Naive thymus-derived CD8-positive, alpha-beta T cell (primary cell): ENCODE measurements at regions of chr14 and their contacts with region 1.

Region 1: DNA sequence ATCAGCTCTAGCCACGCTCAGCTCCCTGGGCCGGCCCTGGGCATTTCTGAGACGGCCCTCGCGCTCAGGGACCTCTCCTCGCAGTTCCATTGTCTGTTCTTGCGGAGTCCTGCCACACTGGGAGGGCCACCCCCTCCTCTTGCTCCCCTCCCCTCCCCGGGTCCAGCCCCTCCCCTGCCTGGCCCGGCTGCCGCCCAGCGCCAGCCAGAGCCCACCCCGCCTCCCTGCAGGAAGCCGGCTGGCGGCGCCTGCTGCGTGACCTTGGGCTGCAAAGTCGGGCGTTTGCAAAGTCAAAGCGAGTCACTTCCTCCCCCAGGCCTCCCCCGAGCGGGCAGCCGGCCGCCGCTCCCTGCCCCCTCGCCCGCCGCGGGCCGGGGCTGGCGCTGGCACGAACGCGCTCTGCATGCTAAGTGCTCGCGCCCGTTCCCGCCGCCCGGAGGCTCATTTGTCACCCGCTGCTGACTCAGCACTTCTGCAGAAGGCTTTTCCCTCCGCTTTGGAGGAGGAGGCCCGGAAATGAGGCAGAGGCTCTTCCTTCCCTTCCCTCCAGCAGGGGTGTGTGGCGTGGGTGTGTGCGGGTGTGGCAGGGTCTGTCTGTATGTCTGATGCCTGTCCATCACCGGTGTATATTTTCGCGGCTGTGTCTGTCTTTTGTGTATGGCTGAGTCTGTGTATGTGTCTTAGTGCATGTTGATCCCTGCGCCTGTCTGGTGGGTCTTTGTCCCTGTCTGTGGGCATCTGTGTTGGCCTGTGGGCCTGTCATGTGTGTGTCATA is 72.0 kb downstream of the IRF2BPL start:
- DNase-seq: peak; percentile 66 to 88 (median 77)
- ATAC-seq: peak; percentile 53 to 55
- H3K4me3 Mint-ChIP-seq: peak overlapping the region; percentile 79 to 92 (median 89)
- H3K27ac Mint-ChIP-seq: peak overlapping the region; percentile 93 to 99 (median 96)
- H3K4me1 Mint-ChIP-seq: peaks cover 23 to 78% (median 72%) of the 10 kb centered on the region in 4 donors
- H3K27me3 Mint-ChIP-seq: no peaks in the 10 kb centered on the region

Region 2: DNA sequence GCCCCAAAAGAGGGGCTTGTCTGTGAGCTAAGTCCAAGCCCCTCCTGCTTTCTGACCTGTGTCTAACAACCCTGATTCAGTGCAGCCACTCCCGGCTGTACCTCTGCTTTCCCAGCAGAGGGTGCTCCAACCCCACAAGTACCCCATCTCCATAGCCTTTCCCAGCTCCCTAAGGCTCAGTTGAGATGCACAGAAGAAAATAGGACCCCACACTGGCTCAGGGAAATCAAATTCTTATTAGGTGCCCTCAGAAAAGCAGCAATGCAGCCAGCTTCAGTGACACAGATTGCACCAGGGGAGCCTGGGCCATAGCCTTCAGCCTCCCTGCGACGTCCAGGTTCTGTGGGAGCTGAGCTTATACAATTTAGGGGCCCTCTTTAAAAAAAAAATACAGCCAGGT is 80.4 kb before region 1 on chr14:
- POLR2A ChIA-PET with region 1: no interaction called
- DNase-seq: peak in 9 of 10 donors; percentile 16 to 56 (median 39)
- ATAC-seq: peak; percentile 69 to 75
- H3K4me3 Mint-ChIP-seq: no peak overlapping the region
- H3K27ac Mint-ChIP-seq: no peak overlapping the region
- H3K4me1 Mint-ChIP-seq: peaks cover 0 to 2% (median under 1%) of the 10 kb centered on the region in 4 donors
- H3K27me3 Mint-ChIP-seq: no peaks in the 10 kb centered on the region

Region 3: DNA sequence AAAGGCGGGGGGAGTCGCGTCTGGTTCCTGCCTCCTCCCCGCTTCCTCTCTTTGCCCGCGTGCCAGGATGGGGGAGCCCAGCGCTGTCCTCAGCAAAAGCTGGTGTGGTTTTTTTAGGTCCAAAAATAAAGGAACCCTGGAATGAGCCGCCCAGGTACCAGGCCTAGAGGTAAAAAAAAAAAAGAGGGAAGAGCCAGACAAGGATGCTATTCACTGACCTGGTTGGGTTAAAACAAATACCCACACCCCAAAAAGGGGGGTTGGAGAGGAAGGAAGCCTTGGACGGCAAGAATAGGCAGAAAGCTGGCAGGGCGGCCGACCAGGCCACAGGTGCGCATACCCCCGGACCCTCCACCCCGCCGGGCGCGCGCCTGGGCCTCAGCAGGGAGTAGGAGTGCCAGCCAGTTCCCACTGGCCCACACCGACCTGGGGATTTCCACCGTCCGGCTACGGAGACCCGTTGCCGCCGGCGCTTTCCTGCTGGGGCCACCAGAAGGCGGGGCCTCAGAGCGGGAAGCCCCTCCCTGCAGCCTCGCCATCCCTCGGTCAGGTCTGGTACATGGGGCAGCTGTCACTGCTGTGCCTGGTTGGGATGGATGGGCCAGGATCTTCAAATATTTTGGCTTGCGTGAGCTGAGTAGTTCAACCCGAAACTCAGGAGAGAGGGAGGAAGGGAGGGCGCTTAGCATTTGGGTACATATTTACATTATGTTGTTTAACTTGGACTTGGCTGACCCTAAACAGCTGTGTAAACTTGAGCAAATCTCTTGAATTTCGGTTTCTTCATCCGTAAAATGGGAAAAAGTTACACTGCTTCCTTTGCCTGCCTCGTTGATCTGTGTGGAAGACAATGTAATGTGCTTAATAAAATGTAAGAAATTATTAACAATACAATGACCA is 77.4 kb after region 1 on chr14:
- POLR2A ChIA-PET with region 1: interaction called, 86 read pairs
- DNase-seq: peak; percentile 44 to 79 (median 65)
- ATAC-seq: peak; percentile 38 to 57
- H3K4me3 Mint-ChIP-seq: peak overlapping the region; percentile 87 to 97 (median 90)
- H3K27ac Mint-ChIP-seq: peak overlapping the region; percentile 92 to 98 (median 96)
- H3K4me1 Mint-ChIP-seq: peaks cover 56 to 88% (median 80%) of the 10 kb centered on the region in 4 donors
- H3K27me3 Mint-ChIP-seq: no peaks in the 10 kb centered on the region

Region 4: DNA sequence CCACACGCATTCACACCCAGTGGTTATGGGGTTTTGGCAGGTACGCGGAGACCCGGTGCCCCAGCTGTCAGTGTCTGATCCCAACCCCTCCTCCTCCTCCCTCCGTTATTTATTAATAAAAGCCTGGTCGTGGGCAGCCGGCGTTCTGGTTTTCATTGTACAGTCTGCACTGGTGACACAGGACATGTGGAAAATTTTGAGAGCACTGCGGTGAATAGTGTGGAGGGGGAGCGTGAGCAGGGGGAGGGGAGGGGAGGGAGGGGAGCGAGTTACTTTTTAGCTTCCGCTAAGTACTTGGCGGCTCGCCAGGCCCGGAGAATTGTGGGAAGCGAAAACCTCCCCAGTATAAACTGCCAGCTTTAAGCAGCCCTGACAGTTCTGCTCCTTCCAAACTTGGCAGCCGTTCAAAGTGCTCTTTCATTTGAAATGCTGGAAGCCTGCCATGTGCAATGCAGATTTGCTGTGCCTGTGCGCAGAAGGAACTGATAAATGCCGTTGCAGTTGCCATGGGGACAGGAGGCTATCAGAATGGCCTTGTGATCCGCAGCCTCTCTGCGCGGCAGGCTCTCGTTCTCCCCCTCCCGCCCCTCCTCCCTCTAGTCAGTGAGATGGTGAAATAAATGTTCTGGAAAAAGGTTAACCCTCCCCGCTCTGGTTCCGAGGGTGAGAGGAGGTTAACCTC is 83.7 kb after region 1 on chr14:
- POLR2A ChIA-PET with region 1: interaction called, 33 read pairs
- DNase-seq: peak; percentile 96 to 100 (median 98)
- ATAC-seq: peak; percentile 79 to 85
- H3K4me3 Mint-ChIP-seq: peak overlapping the region; percentile 79 to 93 (median 88)
- H3K27ac Mint-ChIP-seq: peak overlapping the region; percentile 94 to 100 (median 99)
- H3K4me1 Mint-ChIP-seq: peaks cover 49 to 96% (median 87%) of the 10 kb centered on the region in 4 donors
- H3K27me3 Mint-ChIP-seq: no peaks in the 10 kb centered on the region